Ascending aorta (tissue), 2 donors: ENCODE measurements at regions of chr17 and their contacts with region 1.

Region 1: DNA sequence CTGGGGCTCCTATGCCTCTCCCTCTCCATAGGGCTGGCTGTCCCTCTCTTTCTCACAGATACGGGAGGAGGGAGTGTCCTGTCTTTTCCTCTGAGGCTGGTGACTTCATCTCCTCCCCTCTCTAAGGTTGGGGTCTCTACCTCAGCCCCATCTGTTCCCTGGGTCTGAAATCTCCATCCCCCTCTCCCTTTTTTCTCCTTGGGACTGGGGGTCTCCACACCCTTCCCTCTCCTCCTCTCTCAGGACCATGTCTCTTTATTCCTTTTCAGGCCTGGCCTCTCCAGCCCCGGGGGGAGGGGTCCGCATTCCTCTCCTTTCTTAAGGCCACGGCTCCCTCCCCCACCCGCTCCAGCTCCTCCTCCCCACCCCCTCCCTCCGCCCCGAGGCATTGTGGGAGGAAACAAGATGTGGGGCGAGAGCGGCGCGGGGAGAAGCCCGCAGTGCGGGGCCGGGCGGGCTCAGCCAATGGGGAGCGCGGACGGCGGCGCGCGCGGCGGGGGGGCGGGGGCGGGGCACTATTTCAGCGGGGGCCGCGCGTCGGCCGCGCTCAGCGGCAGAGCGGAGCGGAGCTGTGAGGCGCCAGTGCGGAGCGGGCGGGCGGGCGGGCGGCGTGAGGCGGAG is at the start of gene DYNLL2:
- DNase-seq: peak; percentile 65 to 96
- H3K4me3 ChIP-seq: peak within 1 kb of the TSS; percentile 66 to 76
- H3K27ac ChIP-seq: peak within 1 kb of the TSS; percentile 90 to 92
- H3K4me1 ChIP-seq: peaks cover 6 to 27% of the 10 kb centered on the region in 2 donors
- H3K27me3 ChIP-seq: no peaks in the 10 kb centered on the region
- CTCF ChIP-seq: no peak
- total RNA-seq, gene DYNLL2: 15.3 TPM

Region 2: GRCh38 chr17:57987580-57988421 is 95.2 kb before region 1 on chr17 and contains the start of gene VEZF1:
- intact Hi-C with region 1: loop called (anchors 5 kb)
- DNase-seq: peak in 1 of 2 donors; percentile 85
- H3K4me3 ChIP-seq: peak within 1 kb of the TSS; percentile 84 to 85
- H3K27ac ChIP-seq: peak within 1 kb of the TSS; percentile 97 to 98
- H3K4me1 ChIP-seq: peaks cover 0 to 19% of the 10 kb centered on the region in 2 donors
- H3K27me3 ChIP-seq: no peaks in the 10 kb centered on the region
- CTCF ChIP-seq: no peak
- total RNA-seq, gene VEZF1: 47.4 TPM

Region 3: DNA sequence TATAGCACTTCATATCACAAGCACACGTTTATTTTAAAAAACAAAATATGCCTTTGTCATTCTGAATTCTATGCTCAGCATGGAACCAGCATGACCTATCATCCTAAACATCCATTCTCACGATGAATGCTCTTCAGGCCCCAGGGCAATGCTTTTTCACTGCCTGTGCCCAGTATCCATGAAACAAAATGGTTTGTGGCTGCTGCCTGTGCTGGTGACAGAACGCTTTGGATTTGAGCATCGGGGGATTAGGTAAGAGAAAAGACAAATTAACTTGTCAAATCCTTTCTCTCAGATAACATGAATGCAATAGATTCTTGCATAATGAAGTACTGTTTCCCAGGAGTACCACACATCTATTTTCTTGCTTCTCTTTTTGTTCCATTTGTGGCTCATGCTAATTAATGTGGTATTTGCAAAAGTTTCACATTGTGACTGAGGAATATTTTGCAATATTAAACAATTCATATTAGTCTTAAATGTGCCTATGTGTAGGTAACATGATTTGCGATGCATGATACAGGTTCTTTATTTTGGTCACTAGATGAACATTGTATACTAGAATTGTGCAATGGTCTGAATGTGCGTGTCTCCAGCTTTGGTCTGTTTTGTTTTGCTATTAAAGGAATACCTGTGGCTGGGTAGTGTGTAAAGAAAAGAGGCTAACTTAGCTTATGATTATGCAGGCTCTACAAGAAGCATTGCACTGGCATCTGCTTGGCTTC is 50.1 kb before region 1 on chr17:
- intact Hi-C with region 1: no loop called
- DNase-seq: no peak
- H3K4me3 ChIP-seq: no peak overlapping the region
- H3K27ac ChIP-seq: no peak overlapping the region
- H3K4me1 ChIP-seq: no peaks in the 10 kb centered on the region
- H3K27me3 ChIP-seq: no peaks in the 10 kb centered on the region
- CTCF ChIP-seq: no peak